ENCODE measurements at regions of chr2 and their contacts with region 1.

Region 1: GRCh38 chr2:4992226-4992625 is 700.0 kb upstream of the SOX11 start:
- DNase-seq: peak; percentile 27
- H3K4me3 Mint-ChIP-seq: no peak overlapping the region
- H3K27ac Mint-ChIP-seq: no peak overlapping the region
- H3K4me1 Mint-ChIP-seq: peaks cover 6% of the 10 kb centered on the region
- H3K27me3 Mint-ChIP-seq: no peaks in the 10 kb centered on the region
- CTCF ChIP-seq: peak; percentile 58

Region 2: DNA sequence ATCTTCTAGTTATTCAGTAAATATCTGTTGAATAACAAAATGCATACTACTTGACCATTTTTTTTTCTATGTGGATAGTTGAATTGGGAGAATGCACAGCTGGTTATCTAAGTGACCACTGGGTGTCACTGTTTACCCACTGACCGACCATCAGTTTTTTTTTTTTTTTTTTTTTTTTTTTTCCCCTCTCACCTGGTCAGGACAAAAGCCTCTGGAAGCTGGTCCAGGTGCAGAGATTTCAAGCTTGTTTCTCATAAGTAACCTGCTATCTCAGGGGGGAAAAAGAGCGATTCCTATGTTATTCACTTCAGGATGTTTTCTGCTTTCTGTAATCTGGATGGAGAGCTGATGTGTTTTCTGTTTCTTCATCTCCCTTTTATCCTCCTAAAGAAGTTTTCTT is 1032.9 kb before region 1 on chr2:
- CTCF ChIA-PET with region 1: interaction called, 3 read pairs
- POLR2A ChIA-PET with region 1: no interaction called
- intact Hi-C with region 1: loop called (anchors 5 kb)
- DNase-seq: peak; percentile 46
- H3K4me3 Mint-ChIP-seq: no peak overlapping the region
- H3K27ac Mint-ChIP-seq: no peak overlapping the region
- H3K4me1 Mint-ChIP-seq: peaks cover 10% of the 10 kb centered on the region
- H3K27me3 Mint-ChIP-seq: no peaks in the 10 kb centered on the region
- CTCF ChIP-seq: peak; percentile 55

Region 3: DNA sequence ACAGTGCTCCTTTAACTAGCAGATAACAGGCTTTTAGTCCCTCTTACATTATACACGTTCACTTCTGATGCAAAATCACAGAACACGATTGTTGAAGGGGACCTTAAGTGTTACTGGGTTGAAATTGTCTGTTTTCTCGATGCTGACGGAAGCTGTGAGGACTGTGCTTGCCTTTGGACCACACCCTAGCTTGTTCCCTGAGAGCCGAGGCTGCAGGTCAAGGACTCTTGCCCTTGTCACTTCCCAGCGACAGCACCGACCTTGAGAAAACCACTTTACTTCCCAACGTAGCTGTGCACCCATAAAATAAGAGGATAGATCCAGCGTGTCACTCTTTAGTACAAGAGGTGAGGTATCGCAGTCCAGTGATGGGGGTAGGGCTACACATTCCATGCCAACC is 587.9 kb before region 1 on chr2:
- CTCF ChIA-PET with region 1: no interaction called
- POLR2A ChIA-PET with region 1: no interaction called
- intact Hi-C with region 1: no loop called
- DNase-seq: no peak
- H3K4me3 Mint-ChIP-seq: no peak overlapping the region
- H3K27ac Mint-ChIP-seq: no peak overlapping the region
- H3K4me1 Mint-ChIP-seq: peaks cover 18% of the 10 kb centered on the region
- H3K27me3 Mint-ChIP-seq: no peaks in the 10 kb centered on the region
- CTCF ChIP-seq: no peak

Region 4: DNA sequence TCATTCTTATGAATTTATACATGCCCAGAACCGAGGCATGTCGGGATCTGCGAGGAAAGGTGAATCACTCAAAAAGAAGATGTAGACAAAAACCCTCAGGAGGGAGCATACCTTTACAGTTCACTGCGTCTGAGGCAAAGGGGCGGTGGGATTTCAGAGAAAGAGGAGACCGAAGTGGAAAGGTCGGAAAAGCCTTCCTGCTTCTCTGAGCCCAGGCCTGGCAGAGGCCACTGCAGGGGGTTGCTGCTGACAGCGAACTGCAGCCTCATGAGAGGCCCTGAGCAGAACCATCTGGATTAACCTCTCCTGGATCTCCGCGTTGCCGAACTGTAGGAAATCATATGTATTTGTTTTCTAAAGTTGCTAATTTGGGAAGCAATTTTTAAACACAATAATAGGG is 13.1 kb before region 1 on chr2:
- CTCF ChIA-PET with region 1: interaction called, 10 read pairs
- POLR2A ChIA-PET with region 1: no interaction called
- intact Hi-C with region 1: no loop called
- DNase-seq: no peak
- H3K4me3 Mint-ChIP-seq: no peak overlapping the region
- H3K27ac Mint-ChIP-seq: no peak overlapping the region
- H3K4me1 Mint-ChIP-seq: no peaks in the 10 kb centered on the region
- H3K27me3 Mint-ChIP-seq: no peaks in the 10 kb centered on the region
- CTCF ChIP-seq: no peak

Region 5: DNA sequence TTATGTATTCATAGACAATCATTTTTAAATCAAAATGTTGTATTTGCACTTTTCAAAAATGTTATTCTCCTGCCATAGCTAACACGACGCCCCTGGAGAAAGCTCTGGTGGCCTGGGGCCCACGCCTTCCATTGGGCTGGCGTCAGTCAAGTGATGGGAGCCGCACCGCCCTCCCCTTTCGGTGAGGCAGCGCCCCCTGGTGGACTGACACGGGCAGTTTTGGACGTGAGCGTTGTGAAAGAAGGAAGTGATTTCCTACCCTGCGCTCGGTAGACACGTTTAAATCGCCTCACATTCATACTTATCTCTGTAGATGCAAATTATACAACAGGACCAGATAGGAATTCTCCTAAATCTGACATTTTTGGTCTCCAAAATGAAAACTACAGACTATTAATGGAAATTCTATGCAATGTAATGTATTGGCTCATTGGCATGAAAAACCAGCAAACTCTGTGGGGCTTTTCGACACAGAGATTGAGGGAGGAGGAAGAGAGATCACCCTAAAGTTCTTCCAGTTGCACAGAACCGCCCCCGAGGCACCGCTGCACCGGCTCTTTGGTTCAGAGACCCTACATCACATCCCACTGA is 373.7 kb after region 1 on chr2:
- CTCF ChIA-PET with region 1: interaction called, 21 read pairs
- POLR2A ChIA-PET with region 1: no interaction called
- intact Hi-C with region 1: no loop called
- DNase-seq: peak; percentile 61
- H3K4me3 Mint-ChIP-seq: no peak overlapping the region
- H3K27ac Mint-ChIP-seq: no peak overlapping the region
- H3K4me1 Mint-ChIP-seq: no peaks in the 10 kb centered on the region
- H3K27me3 Mint-ChIP-seq: no peaks in the 10 kb centered on the region
- CTCF ChIP-seq: peak; percentile 66

Region 6: GRCh38 chr2:5915881-5916310 is 923.7 kb after region 1 on chr2:
- CTCF ChIA-PET with region 1: interaction called, 5 read pairs
- POLR2A ChIA-PET with region 1: no interaction called
- intact Hi-C with region 1: loop called (anchors 1 kb)
- DNase-seq: peak; percentile 3
- H3K4me3 Mint-ChIP-seq: no peak overlapping the region
- H3K27ac Mint-ChIP-seq: no peak overlapping the region
- H3K4me1 Mint-ChIP-seq: peaks cover 24% of the 10 kb centered on the region
- H3K27me3 Mint-ChIP-seq: no peaks in the 10 kb centered on the region
- CTCF ChIP-seq: peak; percentile 37

Region 7: DNA sequence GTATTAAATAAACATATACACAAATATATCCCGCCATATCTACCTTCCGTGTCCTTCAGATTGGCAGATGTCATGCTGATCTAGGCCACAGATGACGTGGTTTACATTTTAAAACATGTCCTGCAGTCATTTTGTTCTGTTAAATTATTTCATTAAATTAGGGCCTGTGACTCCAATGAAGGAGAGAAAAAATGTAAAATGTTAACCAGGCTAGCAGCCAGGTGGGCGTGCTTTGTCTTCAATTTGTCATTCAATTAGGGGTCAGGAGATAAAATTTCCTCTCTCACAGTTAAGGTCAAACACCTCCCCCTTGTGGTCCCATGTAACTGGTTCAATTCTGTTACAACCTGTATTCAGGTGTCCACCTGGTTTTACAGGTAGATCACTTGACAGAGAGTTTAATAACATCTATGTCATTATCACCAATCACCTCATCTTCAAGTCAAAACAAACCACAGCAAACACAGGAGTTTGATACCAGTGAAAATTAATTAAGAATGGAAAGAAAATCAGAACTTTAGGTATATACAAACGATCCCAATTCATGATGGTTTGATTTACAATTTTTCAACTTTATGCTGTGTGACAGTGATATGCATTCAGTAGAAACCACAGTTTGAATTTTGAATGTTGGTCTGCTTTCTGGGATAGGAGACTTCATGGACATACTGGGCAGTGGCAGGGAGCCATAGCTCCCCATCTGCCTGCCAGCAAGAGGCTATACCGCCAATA is 1534.0 kb after region 1 on chr2:
- CTCF ChIA-PET with region 1: interaction called, 4 read pairs
- POLR2A ChIA-PET with region 1: no interaction called
- intact Hi-C with region 1: loop called (anchors 1 kb)
- DNase-seq: peak; percentile 51
- H3K4me3 Mint-ChIP-seq: no peak overlapping the region
- H3K27ac Mint-ChIP-seq: no peak overlapping the region
- H3K4me1 Mint-ChIP-seq: no peaks in the 10 kb centered on the region
- H3K27me3 Mint-ChIP-seq: no peaks in the 10 kb centered on the region
- CTCF ChIP-seq: peak; percentile 48

Region 8: DNA sequence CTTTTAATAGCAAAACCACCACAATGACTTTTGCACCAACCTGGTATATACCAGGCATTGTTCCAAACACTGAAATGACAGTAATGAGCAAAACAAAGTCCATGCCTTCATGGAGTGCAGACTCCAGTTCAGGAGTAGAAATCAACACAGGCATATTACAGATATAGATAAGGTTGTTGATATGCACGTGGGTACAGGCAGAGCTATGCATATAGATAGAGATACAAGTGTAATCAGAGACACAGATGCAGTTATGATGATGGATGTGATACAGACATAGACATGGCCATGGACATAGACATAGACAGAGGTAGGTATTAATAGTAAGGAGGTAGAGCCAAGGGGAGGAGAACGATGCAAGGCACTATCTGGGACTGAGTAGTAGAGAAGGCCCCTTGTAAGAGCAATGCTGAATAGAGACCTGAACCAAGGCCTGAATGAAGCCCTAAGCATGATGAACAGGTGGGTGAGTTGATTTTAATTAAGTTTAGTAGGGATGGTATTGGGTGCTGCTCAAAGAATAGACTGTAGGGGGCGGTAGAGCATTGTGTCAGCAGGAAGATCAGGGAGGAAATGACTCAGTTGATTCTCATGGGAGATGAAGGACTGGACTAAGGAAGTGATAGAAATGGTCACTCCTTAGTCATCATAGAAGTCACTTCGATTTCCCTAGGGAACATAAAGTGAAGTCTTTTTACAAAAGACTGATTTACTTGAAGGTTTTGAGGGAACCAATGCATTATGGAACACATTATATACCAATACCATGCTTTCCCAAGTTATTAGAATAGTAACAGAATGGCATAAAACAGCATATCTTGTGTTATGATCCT is 1834.1 kb after region 1 on chr2:
- CTCF ChIA-PET with region 1: no interaction called
- POLR2A ChIA-PET with region 1: no interaction called
- intact Hi-C with region 1: loop called (anchors 5 kb)
- DNase-seq: peak; percentile 79
- H3K4me3 Mint-ChIP-seq: no peak overlapping the region
- H3K27ac Mint-ChIP-seq: no peak overlapping the region
- H3K4me1 Mint-ChIP-seq: peaks cover 6% of the 10 kb centered on the region
- H3K27me3 Mint-ChIP-seq: no peaks in the 10 kb centered on the region
- CTCF ChIP-seq: peak; percentile 37